Left ventricle myocardium superior (tissue), 1 donor: ENCODE measurements at regions of chrX and their contacts with region 1.

Region 1: GRCh38 chrX:10119399-10119990 is 37.3 kb upstream of the CLCN4 start:
- DNase-seq: no peak
- ATAC-seq: peak; percentile 75

Region 2: GRCh38 chrX:9995855-9996339 is 123.6 kb before region 1 on chrX:
- intact Hi-C with region 1: loop called (anchors 5 kb)
- DNase-seq: peak; percentile 89
- ATAC-seq: peak; percentile 96